Naive thymus-derived CD4-positive, alpha-beta T cell (primary cell): ENCODE measurements at regions of chr14 and their contacts with region 1.

Region 1: DNA sequence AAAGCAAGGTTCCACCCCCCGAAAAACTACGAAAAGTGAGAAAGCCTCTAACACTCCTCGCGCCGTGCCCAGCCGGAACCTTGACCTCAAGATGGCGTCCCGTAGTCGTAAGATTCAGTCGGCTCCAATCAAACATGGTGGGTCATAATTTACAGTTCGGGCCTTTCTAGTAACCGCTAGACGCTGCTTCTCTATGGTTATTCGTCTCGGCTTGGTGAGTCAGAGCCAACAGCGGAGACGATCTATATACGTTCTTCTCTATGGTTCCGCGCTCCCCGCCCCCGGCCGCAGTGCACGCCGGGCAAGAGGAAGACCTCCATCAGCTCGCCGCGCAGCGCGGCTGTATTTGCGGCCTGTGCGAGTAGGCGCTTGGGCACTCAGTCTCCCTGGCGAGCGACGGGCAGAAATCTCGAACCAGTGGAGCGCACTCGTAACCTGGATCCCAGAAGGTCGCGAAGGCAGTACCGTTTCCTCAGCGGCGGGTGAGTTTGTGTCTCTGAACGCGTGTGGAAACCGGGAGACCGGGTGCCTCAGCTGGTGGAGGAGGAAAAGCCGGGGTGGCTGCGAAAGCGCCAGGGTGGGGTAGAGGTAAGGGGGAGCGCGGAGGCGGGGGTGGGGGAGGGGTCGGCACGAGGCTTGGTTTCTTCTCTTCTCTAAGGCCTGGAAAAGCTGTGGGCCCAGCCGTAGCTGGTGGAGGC is at the start of gene RBM25:
- DNase-seq: peak; percentile 85 to 98 (median 96)
- ATAC-seq: peak; percentile 99
- H3K4me3 ChIP-seq: peak within 1 kb of the TSS; percentile 77
- H3K4me3 Mint-ChIP-seq: no peak within 1 kb of the TSS
- H3K27ac ChIP-seq: peak within 1 kb of the TSS; percentile 92
- H3K27ac Mint-ChIP-seq: no peak within 1 kb of the TSS
- H3K4me1 ChIP-seq: peaks cover 30 to 36% of the 10 kb centered on the region in 2 donors
- H3K4me1 Mint-ChIP-seq: peaks cover 19 to 45% (median 30%) of the 10 kb centered on the region in 7 donors
- H3K27me3 ChIP-seq: no peaks in the 10 kb centered on the region
- H3K27me3 Mint-ChIP-seq: no peaks in the 10 kb centered on the region
- total RNA-seq, gene RBM25: 111 to 168 (median 146) TPM

Region 2: DNA sequence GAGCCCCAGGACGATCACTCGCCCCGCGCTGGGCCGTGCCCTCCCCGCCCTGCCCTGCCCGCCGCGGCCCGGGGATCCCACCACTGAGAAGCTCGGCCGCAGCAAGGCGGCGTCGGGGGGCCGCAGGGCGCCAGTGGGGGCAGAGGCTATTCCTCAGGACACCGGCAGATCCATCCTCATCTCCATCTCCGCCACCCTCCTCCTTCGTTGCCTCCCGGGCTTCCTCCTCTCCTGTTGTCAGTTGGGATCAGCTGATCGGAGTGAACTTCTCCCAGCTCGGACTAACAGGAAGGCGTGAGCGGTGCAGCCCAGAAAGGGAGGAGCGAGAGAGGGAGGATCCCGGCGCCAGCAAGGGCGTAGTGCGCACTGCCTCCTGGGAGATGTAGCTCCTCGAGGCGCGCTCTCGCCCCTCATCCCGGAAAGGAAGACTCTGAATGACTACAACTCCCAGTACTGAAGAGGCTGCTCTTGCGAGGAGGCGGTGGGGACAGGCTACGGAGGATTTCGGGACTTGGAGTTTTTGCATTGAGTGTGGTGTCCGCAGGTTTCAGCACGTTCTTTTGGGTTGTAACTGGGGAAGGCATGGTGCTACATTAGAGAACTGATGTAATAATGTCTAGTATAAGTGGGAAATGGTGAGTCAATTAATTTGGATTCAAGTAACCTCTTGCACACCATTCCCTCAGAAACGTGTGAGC is 31.4 kb before region 1 on chr14 and contains the start of gene ZFYVE1:
- CTCF ChIA-PET with region 1: interaction called, 3 read pairs
- POLR2A ChIA-PET with region 1: interaction called, 55 read pairs
- intact Hi-C with region 1: loop called (anchors 1 kb)
- DNase-seq: peak; percentile 65 to 91 (median 86)
- ATAC-seq: peak; percentile 100
- H3K4me3 ChIP-seq: peak within 1 kb of the TSS; percentile 74
- H3K4me3 Mint-ChIP-seq: peak within 1 kb of the TSS; percentile 80 to 99 (median 96)
- H3K27ac ChIP-seq: peak within 1 kb of the TSS; percentile 74
- H3K27ac Mint-ChIP-seq: peak within 1 kb of the TSS; percentile 71 to 96 (median 83)
- H3K4me1 ChIP-seq: peaks cover 11 to 12% of the 10 kb centered on the region in 2 donors
- H3K4me1 Mint-ChIP-seq: peaks cover 33 to 50% (median 45%) of the 10 kb centered on the region in 7 donors
- H3K27me3 ChIP-seq: no peaks in the 10 kb centered on the region
- H3K27me3 Mint-ChIP-seq: no peaks in the 10 kb centered on the region
- total RNA-seq, gene ZFYVE1: 15.3 to 24.8 (median 19.1) TPM

Region 3: GRCh38 chr14:73591690-73592448 is 533.5 kb after region 1 on chr14 and contains the start of gene ACOT4:
- CTCF ChIA-PET with region 1: no interaction called
- POLR2A ChIA-PET with region 1: no interaction called
- intact Hi-C with region 1: loop called in 1 of 2 experiments (anchors 1 kb)
- DNase-seq: peak; percentile 43 to 77 (median 73)
- ATAC-seq: peak; percentile 93
- H3K4me3 ChIP-seq: peak within 1 kb of the TSS; percentile 74
- H3K4me3 Mint-ChIP-seq: peak within 1 kb of the TSS; percentile 61 to 87 (median 79)
- H3K27ac ChIP-seq: peak within 1 kb of the TSS; percentile 63
- H3K27ac Mint-ChIP-seq: peak within 1 kb of the TSS in 8 of 9 donors; percentile 29 to 89 (median 70)
- H3K4me1 ChIP-seq: no peaks in the 10 kb centered on the region
- H3K4me1 Mint-ChIP-seq: peaks cover 0 to 19% (median 5%) of the 10 kb centered on the region in 7 donors
- H3K27me3 ChIP-seq: no peaks in the 10 kb centered on the region
- H3K27me3 Mint-ChIP-seq: peaks cover 0 to 10% (median 0%) of the 10 kb centered on the region in 5 donors
- total RNA-seq, gene ACOT4: 0.69 to 1.0 (median 0.89) TPM

Region 4: GRCh38 chr14:73851644-73852382 is 793.4 kb after region 1 on chr14 and contains the start of gene PTGR2:
- CTCF ChIA-PET with region 1: no interaction called
- POLR2A ChIA-PET with region 1: no interaction called
- intact Hi-C with region 1: loop called in 1 of 2 experiments (anchors 5 kb)
- DNase-seq: peak; percentile 79 to 92 (median 86)
- ATAC-seq: peak; percentile 98
- H3K4me3 ChIP-seq: peak within 1 kb of the TSS; percentile 76
- H3K4me3 Mint-ChIP-seq: peak within 1 kb of the TSS; percentile 88 to 99 (median 96)
- H3K27ac ChIP-seq: peak within 1 kb of the TSS; percentile 85
- H3K27ac Mint-ChIP-seq: peak within 1 kb of the TSS; percentile 92 to 99 (median 97)
- H3K4me1 ChIP-seq: peaks cover 8 to 9% of the 10 kb centered on the region in 2 donors
- H3K4me1 Mint-ChIP-seq: peaks cover 3 to 28% (median 21%) of the 10 kb centered on the region in 7 donors
- H3K27me3 ChIP-seq: no peaks in the 10 kb centered on the region
- H3K27me3 Mint-ChIP-seq: no peaks in the 10 kb centered on the region
- total RNA-seq, gene PTGR2: 1.2 to 7.9 (median 1.8) TPM

Region 5: GRCh38 chr14:74176400-74176793 is 1118.0 kb after region 1 on chr14:
- CTCF ChIA-PET with region 1: no interaction called
- POLR2A ChIA-PET with region 1: no interaction called
- intact Hi-C with region 1: no loop called
- DNase-seq: no peak
- ATAC-seq: no peak
- H3K4me3 ChIP-seq: no peak overlapping the region
- H3K4me3 Mint-ChIP-seq: no peak overlapping the region
- H3K27ac ChIP-seq: no peak overlapping the region
- H3K27ac Mint-ChIP-seq: no peak overlapping the region
- H3K4me1 ChIP-seq: no peaks in the 10 kb centered on the region
- H3K4me1 Mint-ChIP-seq: peaks cover 0 to 2% (median 0%) of the 10 kb centered on the region in 7 donors
- H3K27me3 ChIP-seq: no peaks in the 10 kb centered on the region
- H3K27me3 Mint-ChIP-seq: no peaks in the 10 kb centered on the region

Region 6: GRCh38 chr14:74493343-74494261 is 1435.2 kb after region 1 on chr14 and contains the start of gene ISCA2:
- CTCF ChIA-PET with region 1: no interaction called
- POLR2A ChIA-PET with region 1: interaction called, 5 read pairs
- intact Hi-C with region 1: loop called in 1 of 2 experiments (anchors 10 kb)
- DNase-seq: peak; percentile 95 to 99 (median 98)
- ATAC-seq: peak; percentile 94
- H3K4me3 ChIP-seq: peak within 1 kb of the TSS; percentile 96
- H3K4me3 Mint-ChIP-seq: peak within 1 kb of the TSS in 1 of 10 donors; percentile 89
- H3K27ac ChIP-seq: peak within 1 kb of the TSS; percentile 91
- H3K27ac Mint-ChIP-seq: peak within 1 kb of the TSS in 7 of 9 donors; percentile 87 to 96 (median 91)
- H3K4me1 ChIP-seq: peaks cover 12 to 18% of the 10 kb centered on the region in 2 donors
- H3K4me1 Mint-ChIP-seq: peaks cover 7 to 45% (median 37%) of the 10 kb centered on the region in 7 donors
- H3K27me3 ChIP-seq: no peaks in the 10 kb centered on the region
- H3K27me3 Mint-ChIP-seq: no peaks in the 10 kb centered on the region
- total RNA-seq, gene ISCA2: 13.9 to 39.5 (median 25.2) TPM